ENCODE measurements at regions of chr3 and their contacts with region 1.

Region 1: GRCh38 chr3:98994128-98994762 is 92.8 kb upstream of the DCBLD2 start:
- DNase-seq: no peak
- H3K4me3 ChIP-seq: no peak overlapping the region
- H3K27ac ChIP-seq: no peak overlapping the region
- H3K4me1 ChIP-seq: no peaks in the 10 kb centered on the region
- H3K27me3 ChIP-seq: no peaks in the 10 kb centered on the region
- CTCF ChIP-seq: peak; percentile 64 to 71 (median 66)
- POLR2A ChIP-seq: no peak

Region 2: GRCh38 chr3:97432914-97433313 is 1561.3 kb before region 1 on chr3:
- intact Hi-C with region 1: no loop called
- DNase-seq: no peak
- H3K4me3 ChIP-seq: no peak overlapping the region
- H3K27ac ChIP-seq: peak overlapping the region in 1 of 2 donors; percentile 7
- H3K4me1 ChIP-seq: no peaks in the 10 kb centered on the region
- H3K27me3 ChIP-seq: no peaks in the 10 kb centered on the region
- CTCF ChIP-seq: no peak
- POLR2A ChIP-seq: no peak

Region 3: GRCh38 chr3:97670952-97671351 is 1323.3 kb before region 1 on chr3:
- intact Hi-C with region 1: loop called (anchors 10 kb)
- DNase-seq: no peak
- H3K4me3 ChIP-seq: no peak overlapping the region
- H3K27ac ChIP-seq: no peak overlapping the region
- H3K4me1 ChIP-seq: no peaks in the 10 kb centered on the region
- H3K27me3 ChIP-seq: no peaks in the 10 kb centered on the region
- CTCF ChIP-seq: no peak
- POLR2A ChIP-seq: no peak

Region 4: DNA sequence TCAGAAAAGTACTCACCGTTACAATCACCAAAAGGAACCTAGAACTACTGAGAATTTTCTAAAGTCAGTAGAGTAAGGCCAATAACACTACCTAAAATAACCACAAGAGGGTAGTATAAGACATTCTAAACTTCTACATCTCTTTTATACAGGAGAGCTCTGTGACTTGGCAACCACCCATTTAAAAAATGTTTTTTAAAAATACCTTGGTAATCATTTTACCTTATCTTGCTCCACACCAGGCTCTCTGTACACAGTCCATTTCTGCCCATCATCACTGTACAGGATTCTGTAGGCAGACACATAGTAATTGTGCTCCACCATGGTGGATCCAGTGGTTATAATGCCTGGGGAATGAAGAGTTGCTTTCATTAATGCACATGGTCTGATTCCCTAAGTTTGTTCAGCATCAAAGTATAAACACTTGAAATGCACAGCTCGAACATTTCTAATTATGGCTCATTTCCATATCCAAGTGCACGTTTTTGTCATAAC is 176.7 kb before region 1 on chr3:
- intact Hi-C with region 1: loop called (anchors 10 kb)
- DNase-seq: no peak
- H3K4me3 ChIP-seq: no peak overlapping the region
- H3K27ac ChIP-seq: no peak overlapping the region
- H3K4me1 ChIP-seq: no peaks in the 10 kb centered on the region
- H3K27me3 ChIP-seq: no peaks in the 10 kb centered on the region
- CTCF ChIP-seq: peak; percentile 67 to 85 (median 78)
- POLR2A ChIP-seq: no peak

Region 5: DNA sequence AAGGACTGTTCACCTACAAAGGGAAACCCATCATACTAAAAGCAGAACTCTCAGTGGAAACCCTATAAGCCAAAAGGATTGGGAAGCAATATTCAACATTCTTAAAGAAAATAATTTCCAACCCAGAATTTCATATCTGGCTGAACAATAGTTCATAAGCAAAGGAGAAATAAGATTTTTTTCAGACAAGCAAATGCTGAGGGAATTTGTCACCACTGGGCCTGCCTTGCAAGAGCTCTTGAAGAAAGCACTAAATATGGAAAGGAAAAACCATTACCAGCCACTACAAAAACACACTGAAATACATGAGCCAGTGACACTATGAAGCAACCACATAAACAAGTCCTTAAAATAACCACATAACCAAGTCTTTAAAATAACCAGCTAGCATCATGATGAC is 63.8 kb before region 1 on chr3:
- intact Hi-C with region 1: no loop called
- DNase-seq: no peak
- H3K4me3 ChIP-seq: no peak overlapping the region
- H3K27ac ChIP-seq: no peak overlapping the region
- H3K4me1 ChIP-seq: no peaks in the 10 kb centered on the region
- H3K27me3 ChIP-seq: no peaks in the 10 kb centered on the region
- CTCF ChIP-seq: no peak
- POLR2A ChIP-seq: no peak